HCT116 (cell line): ENCODE measurements at regions of chr3 and their contacts with region 1.

Region 1: DNA sequence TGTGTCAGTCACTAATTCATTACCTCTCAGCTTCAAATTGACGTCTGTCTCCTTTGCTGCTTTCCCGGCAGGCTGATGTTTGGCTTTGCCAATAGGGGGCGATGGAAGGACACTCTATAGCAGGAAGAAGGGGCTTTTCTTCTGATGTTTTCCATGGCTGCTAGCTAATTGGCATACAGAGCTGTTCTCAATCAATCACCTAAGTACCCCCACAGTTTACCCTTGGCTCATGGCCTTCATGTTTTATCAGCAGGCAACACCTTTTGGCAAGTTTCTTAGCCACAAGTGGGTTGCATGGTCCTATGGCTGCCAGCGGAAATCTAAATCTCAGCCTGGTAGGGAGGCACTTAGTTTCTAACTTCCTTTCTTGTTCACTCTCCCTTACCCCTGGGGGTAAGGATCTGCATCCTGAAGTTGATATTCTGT is 45.0 kb downstream of the ESYT3 start:
- DNase-seq: peak; percentile 35
- ATAC-seq: peak; percentile 87
- H3K4me3 ChIP-seq: no peak overlapping the region
- H3K27ac ChIP-seq: no peak overlapping the region
- H3K4me1 ChIP-seq: no peaks in the 10 kb centered on the region
- H3K27me3 ChIP-seq: no peaks in the 10 kb centered on the region
- CTCF ChIP-seq: peak; percentile 65 to 97 (median 91); a peak in 5 of 6 replicates
- POLR2A ChIP-seq: no peak
- RAD21 ChIP-seq: peak; percentile 80

Region 2: GRCh38 chr3:137669519-137670060 is 809.9 kb before region 1 on chr3:
- CTCF ChIA-PET with region 1: no interaction called
- POLR2A ChIA-PET with region 1: no interaction called
- RAD21 ChIA-PET with region 1: no interaction called
- intact Hi-C with region 1: no loop called
- DNase-seq: no peak
- ATAC-seq: no peak
- H3K4me3 ChIP-seq: no peak overlapping the region
- H3K27ac ChIP-seq: no peak overlapping the region
- H3K4me1 ChIP-seq: no peaks in the 10 kb centered on the region
- H3K27me3 ChIP-seq: no peaks in the 10 kb centered on the region
- CTCF ChIP-seq: no peak
- POLR2A ChIP-seq: no peak
- RAD21 ChIP-seq: no peak

Region 3: DNA sequence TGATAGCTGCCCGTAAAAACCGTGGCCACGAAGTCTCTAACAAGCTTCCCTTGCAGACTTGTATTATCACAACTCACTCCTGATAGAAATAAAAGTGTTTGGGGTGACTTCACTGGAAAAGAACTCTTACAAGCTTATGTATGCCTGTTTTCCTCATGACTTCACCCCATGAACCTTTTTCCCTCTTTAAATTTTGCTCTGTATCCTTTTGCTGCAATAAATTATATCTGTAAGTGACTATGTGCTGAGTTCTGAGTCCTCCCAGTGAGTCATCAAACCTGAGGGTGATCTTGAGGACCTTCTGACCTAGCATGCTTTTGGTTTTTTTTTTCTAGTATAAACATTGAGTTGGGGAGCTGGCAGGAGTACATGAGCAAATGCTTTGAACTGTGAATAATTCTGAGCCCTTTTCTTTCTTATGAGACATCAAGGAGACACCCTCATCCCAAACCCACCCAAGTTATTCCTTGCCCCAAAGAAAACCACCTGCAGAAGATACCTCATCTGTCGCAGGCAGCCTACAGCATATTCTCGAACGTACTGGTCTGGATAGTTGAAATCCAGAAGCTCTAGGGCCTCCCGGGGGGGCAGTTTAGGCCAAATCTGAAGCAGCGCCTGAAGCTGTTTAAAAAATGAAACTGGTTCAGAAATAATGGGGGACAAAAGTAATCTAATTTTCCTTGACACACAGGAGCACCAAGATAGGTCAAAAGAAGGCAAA is 215.0 kb after region 1 on chr3:
- CTCF ChIA-PET with region 1: interaction called, 3 read pairs
- POLR2A ChIA-PET with region 1: no interaction called
- RAD21 ChIA-PET with region 1: no interaction called
- intact Hi-C with region 1: loop called (anchors 10 kb)
- DNase-seq: peak; percentile 47
- ATAC-seq: peak; percentile 84
- H3K4me3 ChIP-seq: no peak overlapping the region
- H3K27ac ChIP-seq: peak overlapping the region; percentile 44; the same call in 1 of the 2 replicates
- H3K4me1 ChIP-seq: peaks cover 13 to 14% of the 10 kb centered on the region in 2 experiments
- H3K27me3 ChIP-seq: no peaks in the 10 kb centered on the region
- CTCF ChIP-seq: no peak
- POLR2A ChIP-seq: no peak
- RAD21 ChIP-seq: no peak